ENCODE measurements at regions of chr7 and their contacts with region 1.

Region 1: GRCh38 chr7:90455163-90456030 is 14.0 kb upstream of the PTTG1IP2 start:
- DNase-seq: peak; percentile 71
- H3K4me3 Mint-ChIP-seq: peak overlapping the region; percentile 63
- H3K27ac Mint-ChIP-seq: peak overlapping the region; percentile 24
- H3K4me1 Mint-ChIP-seq: peaks cover 8% of the 10 kb centered on the region
- H3K27me3 Mint-ChIP-seq: no peaks in the 10 kb centered on the region
- CTCF ChIP-seq: peak; percentile 62

Region 2: DNA sequence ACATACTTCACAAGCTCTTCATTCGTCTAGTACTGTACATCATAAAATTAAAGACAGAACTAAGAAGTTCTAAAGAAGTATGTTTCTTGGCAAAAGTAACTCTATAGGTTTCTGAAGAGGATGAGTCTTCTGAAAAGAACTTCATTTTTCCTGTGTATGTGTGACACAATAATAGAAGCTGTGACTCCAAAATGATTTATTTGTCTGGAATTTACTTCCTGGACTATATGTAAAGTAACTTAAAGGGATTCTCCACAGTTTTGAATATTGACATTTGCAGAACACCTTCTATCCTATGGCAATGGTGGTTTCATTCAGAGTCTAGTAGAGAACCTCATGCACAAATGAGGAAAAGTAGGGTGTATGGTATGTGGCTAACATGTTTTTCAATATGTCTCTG is 72.0 kb before region 1 on chr7:
- CTCF ChIA-PET with region 1: no interaction called
- POLR2A ChIA-PET with region 1: no interaction called
- intact Hi-C with region 1: no loop called
- DNase-seq: peak; percentile 38
- H3K4me3 Mint-ChIP-seq: no peak overlapping the region
- H3K27ac Mint-ChIP-seq: peak overlapping the region; percentile 74
- H3K4me1 Mint-ChIP-seq: peaks cover 15% of the 10 kb centered on the region
- H3K27me3 Mint-ChIP-seq: no peaks in the 10 kb centered on the region
- CTCF ChIP-seq: no peak

Region 3: GRCh38 chr7:90421651-90422050 is 33.7 kb before region 1 on chr7:
- CTCF ChIA-PET with region 1: no interaction called
- POLR2A ChIA-PET with region 1: no interaction called
- intact Hi-C with region 1: no loop called
- DNase-seq: no peak
- H3K4me3 Mint-ChIP-seq: no peak overlapping the region
- H3K27ac Mint-ChIP-seq: no peak overlapping the region
- H3K4me1 Mint-ChIP-seq: peaks cover 7% of the 10 kb centered on the region
- H3K27me3 Mint-ChIP-seq: no peaks in the 10 kb centered on the region
- CTCF ChIP-seq: no peak

Region 4: GRCh38 chr7:90465816-90466215 is 10.4 kb after region 1 on chr7:
- CTCF ChIA-PET with region 1: interaction called, 12 read pairs
- POLR2A ChIA-PET with region 1: no interaction called
- intact Hi-C with region 1: no loop called
- DNase-seq: no peak
- H3K4me3 Mint-ChIP-seq: no peak overlapping the region
- H3K27ac Mint-ChIP-seq: no peak overlapping the region
- H3K4me1 Mint-ChIP-seq: peaks cover 6% of the 10 kb centered on the region
- H3K27me3 Mint-ChIP-seq: no peaks in the 10 kb centered on the region
- CTCF ChIP-seq: no peak

Region 5: DNA sequence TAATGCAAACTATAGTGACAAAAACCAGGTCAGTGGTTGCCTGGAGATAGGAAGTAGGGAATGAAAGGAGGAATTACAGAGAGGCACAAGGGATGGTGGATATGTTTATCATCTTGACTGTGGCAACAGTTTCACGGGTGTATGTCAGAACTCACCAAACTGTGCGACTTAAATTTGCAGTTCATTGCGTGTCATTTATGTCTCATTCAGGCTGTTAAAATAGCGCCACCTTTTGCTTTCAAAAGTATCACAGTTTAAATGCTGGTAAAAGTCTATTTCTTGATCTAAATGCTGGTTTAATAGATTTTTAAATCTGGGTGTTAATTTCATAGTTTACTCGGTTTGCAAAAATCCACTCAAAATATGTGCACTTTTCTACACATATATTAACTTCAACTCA is 65.1 kb after region 1 on chr7:
- CTCF ChIA-PET with region 1: interaction called, 3 read pairs
- POLR2A ChIA-PET with region 1: no interaction called
- intact Hi-C with region 1: loop called (anchors 5 kb)
- DNase-seq: peak; percentile 30
- H3K4me3 Mint-ChIP-seq: no peak overlapping the region
- H3K27ac Mint-ChIP-seq: no peak overlapping the region
- H3K4me1 Mint-ChIP-seq: no peaks in the 10 kb centered on the region
- H3K27me3 Mint-ChIP-seq: no peaks in the 10 kb centered on the region
- CTCF ChIP-seq: peak; percentile 14

Region 6: GRCh38 chr7:90552521-90552920 is 97.1 kb after region 1 on chr7:
- CTCF ChIA-PET with region 1: interaction called, 13 read pairs
- POLR2A ChIA-PET with region 1: no interaction called
- intact Hi-C with region 1: no loop called
- DNase-seq: peak; percentile 34
- H3K4me3 Mint-ChIP-seq: no peak overlapping the region
- H3K27ac Mint-ChIP-seq: no peak overlapping the region
- H3K4me1 Mint-ChIP-seq: no peaks in the 10 kb centered on the region
- H3K27me3 Mint-ChIP-seq: no peaks in the 10 kb centered on the region
- CTCF ChIP-seq: peak; percentile 30

Region 7: GRCh38 chr7:90605055-90605454 is 149.7 kb after region 1 on chr7:
- CTCF ChIA-PET with region 1: interaction called, 16 read pairs
- POLR2A ChIA-PET with region 1: no interaction called
- intact Hi-C with region 1: no loop called
- DNase-seq: no peak
- H3K4me3 Mint-ChIP-seq: no peak overlapping the region
- H3K27ac Mint-ChIP-seq: no peak overlapping the region
- H3K4me1 Mint-ChIP-seq: peaks cover 41% of the 10 kb centered on the region
- H3K27me3 Mint-ChIP-seq: no peaks in the 10 kb centered on the region
- CTCF ChIP-seq: no peak

Region 8: GRCh38 chr7:91034459-91035368 is 579.3 kb after region 1 on chr7:
- CTCF ChIA-PET with region 1: interaction called, 13 read pairs
- POLR2A ChIA-PET with region 1: interaction called, 3 read pairs
- intact Hi-C with region 1: loop called (anchors 1 kb)
- DNase-seq: peak; percentile 57
- H3K4me3 Mint-ChIP-seq: no peak overlapping the region
- H3K27ac Mint-ChIP-seq: no peak overlapping the region
- H3K4me1 Mint-ChIP-seq: no peaks in the 10 kb centered on the region
- H3K27me3 Mint-ChIP-seq: no peaks in the 10 kb centered on the region
- CTCF ChIP-seq: peak; percentile 72